ENCODE measurements at regions of chr5 and their contacts with region 1.

Region 1: GRCh38 chr5:150560401-150561193 is 52.7 kb downstream of the NDST1 start:
- DNase-seq: peak; percentile 92
- ATAC-seq: peak; percentile 97
- H3K4me3 Mint-ChIP-seq: no peak overlapping the region
- H3K27ac Mint-ChIP-seq: no peak overlapping the region
- H3K4me1 Mint-ChIP-seq: no peaks in the 10 kb centered on the region
- H3K27me3 Mint-ChIP-seq: no peaks in the 10 kb centered on the region

Region 2: DNA sequence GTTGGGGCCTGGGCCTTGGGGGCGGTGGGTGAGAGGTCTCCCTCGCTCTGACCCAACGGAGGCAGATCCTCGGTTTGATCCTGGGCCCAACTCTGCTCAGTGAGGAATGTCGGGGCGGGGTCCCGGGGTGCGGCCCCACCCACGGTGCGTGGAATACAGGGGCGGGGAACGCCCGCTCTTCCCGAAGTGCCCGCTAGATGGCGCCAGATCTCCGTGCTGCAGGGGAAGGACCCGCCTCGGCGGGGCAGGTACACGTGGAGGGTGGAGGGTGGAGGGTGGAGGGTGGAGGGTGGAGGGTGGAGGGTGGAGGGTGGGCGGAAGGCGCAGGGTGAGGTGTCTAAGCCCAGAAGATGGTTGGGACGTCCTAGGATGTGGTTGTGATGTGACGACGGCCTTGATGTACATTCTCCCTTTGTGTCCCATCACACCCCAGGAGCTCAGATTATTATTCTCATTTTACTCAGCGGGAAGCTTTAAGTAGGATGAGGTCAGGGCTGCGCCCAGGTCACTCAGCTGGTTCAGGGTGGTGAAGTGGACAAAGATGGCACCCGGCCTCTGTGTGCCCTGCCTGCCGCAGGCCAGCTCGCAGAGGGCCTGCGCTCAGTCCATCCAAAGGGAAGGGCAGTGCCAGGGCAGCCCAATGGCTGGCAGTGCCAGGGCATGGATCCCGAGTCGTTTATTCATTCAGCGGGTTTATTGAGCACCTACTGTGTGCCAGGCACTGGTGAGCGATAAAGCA is 101.6 kb before region 1 on chr5:
- CTCF ChIA-PET with region 1: interaction called, 35 read pairs
- POLR2A ChIA-PET with region 1: no interaction called
- intact Hi-C with region 1: loop called (anchors 1 to 5 kb)
- DNase-seq: peak; percentile 93
- ATAC-seq: peak; percentile 87
- H3K4me3 Mint-ChIP-seq: peak overlapping the region; percentile 49
- H3K27ac Mint-ChIP-seq: peak overlapping the region; percentile 52
- H3K4me1 Mint-ChIP-seq: peaks cover 28% of the 10 kb centered on the region
- H3K27me3 Mint-ChIP-seq: no peaks in the 10 kb centered on the region

Region 3: GRCh38 chr5:150656191-150657132 is 95.9 kb after region 1 on chr5:
- CTCF ChIA-PET with region 1: interaction called, 33 read pairs
- POLR2A ChIA-PET with region 1: no interaction called
- intact Hi-C with region 1: loop called (anchors 1 kb)
- DNase-seq: peak; percentile 82
- ATAC-seq: peak; percentile 82
- H3K4me3 Mint-ChIP-seq: peak overlapping the region; percentile 63
- H3K27ac Mint-ChIP-seq: no peak overlapping the region
- H3K4me1 Mint-ChIP-seq: no peaks in the 10 kb centered on the region
- H3K27me3 Mint-ChIP-seq: no peaks in the 10 kb centered on the region

Region 4: GRCh38 chr5:150665044-150665443 is 104.4 kb after region 1 on chr5:
- CTCF ChIA-PET with region 1: interaction called, 13 read pairs
- POLR2A ChIA-PET with region 1: no interaction called
- intact Hi-C with region 1: loop called in 1 of 2 experiments (anchors 5 kb)
- DNase-seq: no peak
- ATAC-seq: no peak
- H3K4me3 Mint-ChIP-seq: no peak overlapping the region
- H3K27ac Mint-ChIP-seq: no peak overlapping the region
- H3K4me1 Mint-ChIP-seq: no peaks in the 10 kb centered on the region
- H3K27me3 Mint-ChIP-seq: peaks cover 2% of the 10 kb centered on the region

Region 5: GRCh38 chr5:150672237-150672883 is 111.8 kb after region 1 on chr5:
- CTCF ChIA-PET with region 1: interaction called, 3 read pairs
- POLR2A ChIA-PET with region 1: no interaction called
- intact Hi-C with region 1: loop called (anchors 1 to 5 kb)
- DNase-seq: peak; percentile 53
- ATAC-seq: peak; percentile 81
- H3K4me3 Mint-ChIP-seq: peak overlapping the region; percentile 66
- H3K27ac Mint-ChIP-seq: peak overlapping the region; percentile 33
- H3K4me1 Mint-ChIP-seq: no peaks in the 10 kb centered on the region
- H3K27me3 Mint-ChIP-seq: peaks cover 13% of the 10 kb centered on the region

Region 6: GRCh38 chr5:150989695-150990094 is 429.1 kb after region 1 on chr5:
- CTCF ChIA-PET with region 1: no interaction called
- POLR2A ChIA-PET with region 1: no interaction called
- intact Hi-C with region 1: loop called in 1 of 2 experiments (anchors 10 kb)
- DNase-seq: peak; percentile 46
- ATAC-seq: peak; percentile 74
- H3K4me3 Mint-ChIP-seq: no peak overlapping the region
- H3K27ac Mint-ChIP-seq: no peak overlapping the region
- H3K4me1 Mint-ChIP-seq: no peaks in the 10 kb centered on the region
- H3K27me3 Mint-ChIP-seq: no peaks in the 10 kb centered on the region

Region 7: DNA sequence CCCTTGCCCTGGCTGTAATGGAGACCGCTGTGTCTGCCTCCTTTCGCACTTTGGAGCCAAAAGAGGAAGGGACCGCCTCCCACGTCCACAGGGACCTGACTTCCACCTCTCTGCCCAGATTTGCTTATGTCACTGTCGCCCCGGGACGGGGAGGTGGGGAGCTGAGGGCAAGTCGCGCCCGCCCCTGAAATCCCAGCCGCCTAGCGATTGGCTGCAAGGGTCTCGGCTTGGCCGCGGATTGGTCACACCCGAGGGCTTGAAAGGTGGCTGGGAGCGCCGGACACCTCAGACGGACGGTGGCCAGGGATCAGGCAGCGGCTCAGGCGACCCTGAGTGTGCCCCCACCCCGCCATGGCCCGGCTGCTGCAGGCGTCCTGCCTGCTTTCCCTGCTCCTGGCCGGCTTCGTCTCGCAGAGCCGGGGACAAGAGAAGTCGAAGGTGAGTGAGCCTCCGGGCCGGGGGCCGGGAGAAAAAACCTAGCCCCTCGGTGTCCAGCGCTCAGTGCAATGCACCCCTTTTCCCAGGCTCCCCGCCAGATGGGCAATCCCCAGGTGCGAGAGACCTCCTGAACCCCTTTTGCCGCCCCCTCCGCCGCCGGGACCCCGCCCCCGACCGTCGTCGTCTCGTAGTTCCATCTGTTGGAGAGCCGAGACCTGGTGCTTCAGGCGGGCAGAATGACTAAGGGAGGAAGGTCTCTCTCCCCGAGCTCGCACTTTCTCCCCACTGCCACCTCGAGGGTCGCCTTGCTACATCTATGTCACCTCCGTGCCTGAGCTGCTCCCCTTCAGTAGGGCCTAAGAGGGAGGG is 459.9 kb after region 1 on chr5 and contains the start of gene GPX3:
- CTCF ChIA-PET with region 1: no interaction called
- POLR2A ChIA-PET with region 1: no interaction called
- intact Hi-C with region 1: no loop called
- DNase-seq: peak; percentile 49
- ATAC-seq: peak; percentile 56
- H3K4me3 Mint-ChIP-seq: peak within 1 kb of the TSS; percentile 38
- H3K27ac Mint-ChIP-seq: no peak within 1 kb of the TSS
- H3K4me1 Mint-ChIP-seq: peaks cover 21% of the 10 kb centered on the region
- H3K27me3 Mint-ChIP-seq: peaks cover 10% of the 10 kb centered on the region
- total RNA-seq, gene GPX3: not detected

Region 8: DNA sequence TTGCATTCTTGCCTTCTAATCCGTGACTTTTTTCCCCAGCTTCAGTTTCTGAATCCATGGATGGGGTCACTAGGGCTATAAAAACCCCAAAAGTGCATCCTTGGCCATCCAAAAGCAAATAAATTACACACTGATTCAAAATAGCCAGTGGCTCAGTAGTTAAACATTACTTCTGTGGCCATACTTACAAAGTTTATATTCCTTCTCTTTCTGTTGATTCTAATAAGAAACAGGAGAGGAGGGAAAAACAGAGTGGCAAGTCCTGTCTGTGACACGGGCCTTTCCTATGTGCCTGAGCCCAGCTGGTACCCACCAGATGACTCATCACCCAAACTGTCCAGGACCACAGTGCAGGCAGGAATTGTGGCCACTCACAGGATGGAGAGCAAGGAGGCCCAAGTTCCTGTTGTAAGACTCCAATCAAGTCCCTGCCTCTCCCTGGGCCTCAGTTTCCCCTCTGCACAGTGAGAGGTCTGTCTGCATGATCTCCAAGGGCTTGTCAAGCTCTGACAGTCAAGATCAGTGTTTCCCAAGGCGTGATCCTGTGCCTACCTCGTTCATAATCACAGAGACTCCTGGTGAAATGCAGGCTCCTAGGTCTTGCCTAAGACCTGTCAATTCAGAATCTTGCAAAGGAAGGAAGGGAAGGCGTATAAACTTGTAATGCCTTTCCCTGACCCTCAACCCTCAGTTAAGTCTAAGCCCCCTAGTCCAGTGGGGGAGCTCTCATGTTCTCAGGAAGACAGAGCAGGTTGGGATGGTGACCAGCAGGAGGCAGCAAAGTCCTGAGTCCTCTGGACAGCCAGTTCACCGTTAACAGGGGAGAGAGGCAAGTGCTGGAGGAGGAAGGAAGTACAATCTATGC is 490.7 kb after region 1 on chr5:
- CTCF ChIA-PET with region 1: no interaction called
- POLR2A ChIA-PET with region 1: no interaction called
- intact Hi-C with region 1: loop called in 1 of 2 experiments (anchors 5 kb)
- DNase-seq: peak; percentile 82
- ATAC-seq: peak; percentile 84
- H3K4me3 Mint-ChIP-seq: no peak overlapping the region
- H3K27ac Mint-ChIP-seq: no peak overlapping the region
- H3K4me1 Mint-ChIP-seq: peaks cover 5% of the 10 kb centered on the region
- H3K27me3 Mint-ChIP-seq: no peaks in the 10 kb centered on the region